IMR-90 (cell line): ENCODE measurements at regions of chr9 and their contacts with region 1.

Region 1: GRCh38 chr9:72473474-72474261 is 47.7 kb upstream of the TMC1 start:
- DNase-seq: peak; percentile 91
- ATAC-seq: no peak
- H3K4me3 ChIP-seq: no peak overlapping the region
- H3K27ac ChIP-seq: peak overlapping the region; percentile 32; the same call in 1 of the 2 replicates
- H3K4me1 ChIP-seq: peaks cover 23% of the 10 kb centered on the region
- H3K27me3 ChIP-seq: no peaks in the 10 kb centered on the region
- CTCF ChIP-seq: no peak
- POLR2A ChIP-seq: no peak
- RAD21 ChIP-seq: no peak

Region 2: DNA sequence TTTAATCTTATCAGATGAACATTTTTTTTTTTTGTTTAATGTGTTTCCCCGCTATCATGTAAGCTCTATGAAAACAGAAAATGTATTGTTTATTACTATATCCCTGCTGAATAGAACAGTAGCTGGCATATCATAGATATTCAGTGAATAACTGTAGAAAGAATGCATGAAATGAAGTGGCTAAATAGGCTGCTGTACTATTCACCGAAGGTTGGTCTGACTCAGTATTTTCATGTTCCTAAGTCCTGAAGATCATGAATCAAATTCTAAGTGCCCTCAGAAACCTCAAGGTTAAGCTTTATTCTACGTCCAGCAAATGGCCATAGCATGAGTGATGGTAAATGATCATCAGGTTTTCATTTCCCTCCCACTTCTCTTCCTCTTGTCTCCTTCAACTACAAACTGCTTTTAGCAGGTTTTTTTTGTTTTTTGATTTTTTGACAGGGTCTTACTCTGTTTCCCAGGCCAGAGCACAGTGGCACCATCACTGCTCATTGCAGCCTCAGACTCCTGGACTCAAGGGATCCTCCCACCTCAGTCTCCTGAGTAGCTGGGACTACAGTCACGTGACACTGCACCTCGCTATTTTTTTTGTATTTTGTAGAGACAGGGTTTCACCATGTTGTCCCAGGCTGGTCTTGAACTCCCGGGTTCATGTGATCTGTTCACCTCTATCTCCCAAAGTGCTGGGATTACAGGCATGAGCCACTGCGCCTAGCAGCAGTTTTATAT is 89.5 kb before region 1 on chr9:
- CTCF ChIA-PET with region 1: no interaction called
- POLR2A ChIA-PET with region 1: no interaction called
- dilution Hi-C with region 1: no loop called
- in situ Hi-C with region 1: no loop called
- intact Hi-C with region 1: loop called (anchors 5 kb)
- DNase-seq: peak; percentile 94
- ATAC-seq: peak; percentile 89
- H3K4me3 ChIP-seq: no peak overlapping the region
- H3K27ac ChIP-seq: peak overlapping the region; percentile 40
- H3K4me1 ChIP-seq: peaks cover 17% of the 10 kb centered on the region
- H3K27me3 ChIP-seq: no peaks in the 10 kb centered on the region
- CTCF ChIP-seq: no peak
- POLR2A ChIP-seq: no peak
- RAD21 ChIP-seq: peak; percentile 16

Region 3: GRCh38 chr9:72443855-72444254 is 29.8 kb before region 1 on chr9:
- CTCF ChIA-PET with region 1: interaction called, 4 read pairs
- POLR2A ChIA-PET with region 1: interaction called, 10 read pairs
- dilution Hi-C with region 1: no loop called
- in situ Hi-C with region 1: no loop called
- intact Hi-C with region 1: loop called (anchors 5 kb)
- DNase-seq: no peak
- ATAC-seq: no peak
- H3K4me3 ChIP-seq: no peak overlapping the region
- H3K27ac ChIP-seq: peak overlapping the region; percentile 26; the same call in 1 of the 2 replicates
- H3K4me1 ChIP-seq: peaks cover 18% of the 10 kb centered on the region
- H3K27me3 ChIP-seq: no peaks in the 10 kb centered on the region
- CTCF ChIP-seq: no peak
- POLR2A ChIP-seq: no peak
- RAD21 ChIP-seq: no peak

Region 4: DNA sequence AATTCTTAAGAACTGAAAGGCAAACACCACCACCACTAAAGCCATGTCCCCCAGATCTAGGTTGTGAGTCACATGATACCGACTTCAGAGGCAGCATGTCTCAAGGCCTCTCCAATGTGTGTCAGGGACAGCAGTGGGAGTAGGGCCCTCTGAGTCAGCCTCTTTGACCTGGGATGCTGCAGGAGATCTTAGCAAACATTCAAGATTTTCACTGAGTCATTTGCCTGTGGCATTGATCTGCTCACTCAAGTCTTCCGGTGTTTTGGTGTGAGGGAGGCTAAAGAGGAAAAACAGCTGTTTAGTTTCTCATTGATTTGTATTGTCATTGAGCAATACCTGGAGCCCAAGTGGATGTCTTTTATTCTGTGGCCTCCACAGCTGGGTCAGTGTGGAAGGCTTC is 83.9 kb after region 1 on chr9:
- CTCF ChIA-PET with region 1: no interaction called
- POLR2A ChIA-PET with region 1: no interaction called
- dilution Hi-C with region 1: no loop called
- in situ Hi-C with region 1: no loop called
- intact Hi-C with region 1: loop called (anchors 10 kb)
- DNase-seq: peak; percentile 97
- ATAC-seq: peak; percentile 74
- H3K4me3 ChIP-seq: no peak overlapping the region
- H3K27ac ChIP-seq: peak overlapping the region; percentile 35; the same call in 1 of the 2 replicates
- H3K4me1 ChIP-seq: peaks cover 9% of the 10 kb centered on the region
- H3K27me3 ChIP-seq: no peaks in the 10 kb centered on the region
- CTCF ChIP-seq: no peak
- POLR2A ChIP-seq: no peak
- RAD21 ChIP-seq: peak; percentile 20; the same call in 1 of the 2 replicates